ENCODE measurements at regions of chr5 and their contacts with region 1.

Region 1: GRCh38 chr5:57157666-57158065 is 16.2 kb upstream of the GPBP1 start:
- DNase-seq: no peak
- H3K4me3 Mint-ChIP-seq: no peak overlapping the region
- H3K27ac Mint-ChIP-seq: no peak overlapping the region
- H3K4me1 Mint-ChIP-seq: no peaks in the 10 kb centered on the region
- H3K27me3 Mint-ChIP-seq: no peaks in the 10 kb centered on the region

Region 2: GRCh38 chr5:57137401-57137800 is 20.3 kb before region 1 on chr5:
- CTCF ChIA-PET with region 1: interaction called, 15 read pairs
- POLR2A ChIA-PET with region 1: no interaction called
- DNase-seq: no peak
- H3K4me3 Mint-ChIP-seq: no peak overlapping the region
- H3K27ac Mint-ChIP-seq: no peak overlapping the region
- H3K4me1 Mint-ChIP-seq: no peaks in the 10 kb centered on the region
- H3K27me3 Mint-ChIP-seq: peaks cover 5% of the 10 kb centered on the region

Measured in activated CD4-positive, alpha-beta T cell treated with anti-CD3 and anti-CD28 coated beads, Interleukin-2, amount 10 ng/mL, durations not matched to agents 7 days and 5 days (primary cell).